Activated CD4-positive, alpha-beta memory T cell treated with anti-CD3 and anti-CD28 coated beads for 36 hours (primary cell): ENCODE measurements at regions of chr4 and their contacts with region 1.

Region 1: GRCh38 chr4:94406668-94407437 is 44.9 kb upstream of the PDLIM5 start:
- DNase-seq: peak; percentile 63
- H3K4me3 Mint-ChIP-seq: no peak overlapping the region
- H3K27ac Mint-ChIP-seq: no peak overlapping the region
- H3K4me1 Mint-ChIP-seq: no peaks in the 10 kb centered on the region
- H3K27me3 Mint-ChIP-seq: peaks cover 2% of the 10 kb centered on the region

Region 2: DNA sequence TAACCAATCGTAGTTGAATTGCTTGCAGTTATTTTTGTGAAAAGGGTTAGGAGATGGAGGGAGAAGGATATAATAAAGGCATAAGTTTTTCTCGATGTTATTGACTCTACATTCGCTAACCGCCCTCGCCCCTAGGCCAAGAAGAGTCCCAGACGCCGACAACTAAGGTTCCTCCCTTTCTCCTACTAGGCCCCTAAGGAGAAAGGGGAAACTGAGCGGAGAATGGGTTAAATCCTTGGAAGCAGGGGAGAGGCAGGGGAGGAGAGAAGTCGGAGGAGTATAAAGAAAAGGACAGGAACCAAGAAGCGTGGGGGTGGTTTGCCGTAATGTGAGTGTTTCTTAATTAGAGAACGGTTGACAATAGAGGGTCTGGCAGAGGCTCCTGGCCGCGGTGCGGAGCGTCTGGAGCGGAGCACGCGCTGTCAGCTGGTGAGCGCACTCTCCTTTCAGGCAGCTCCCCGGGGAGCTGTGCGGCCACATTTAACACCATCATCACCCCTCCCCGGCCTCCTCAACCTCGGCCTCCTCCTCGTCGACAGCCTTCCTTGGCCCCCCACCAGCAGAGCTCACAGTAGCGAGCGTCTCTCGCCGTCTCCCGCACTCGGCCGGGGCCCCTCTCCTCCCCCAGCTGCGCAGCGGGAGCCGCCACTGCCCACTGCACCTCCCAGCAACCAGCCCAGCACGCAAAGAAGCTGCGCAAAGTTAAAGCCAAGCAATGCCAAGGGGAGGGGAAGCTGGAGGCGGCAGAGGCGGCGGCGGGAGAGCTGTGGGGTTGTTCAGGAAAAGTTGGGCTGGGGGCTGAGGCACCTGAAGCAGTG is 572.4 kb before region 1 on chr4:
- CTCF ChIA-PET with region 1: no interaction called
- POLR2A ChIA-PET with region 1: no interaction called
- intact Hi-C with region 1: no loop called
- DNase-seq: no peak
- H3K4me3 Mint-ChIP-seq: no peak overlapping the region
- H3K27ac Mint-ChIP-seq: no peak overlapping the region
- H3K4me1 Mint-ChIP-seq: peaks cover 9% of the 10 kb centered on the region
- H3K27me3 Mint-ChIP-seq: peaks cover 60% of the 10 kb centered on the region

Region 3: GRCh38 chr4:94304365-94304971 is 102.4 kb before region 1 on chr4:
- CTCF ChIA-PET with region 1: interaction called, 10 read pairs
- POLR2A ChIA-PET with region 1: no interaction called
- intact Hi-C with region 1: no loop called
- DNase-seq: peak; percentile 12
- H3K4me3 Mint-ChIP-seq: no peak overlapping the region
- H3K27ac Mint-ChIP-seq: no peak overlapping the region
- H3K4me1 Mint-ChIP-seq: no peaks in the 10 kb centered on the region
- H3K27me3 Mint-ChIP-seq: no peaks in the 10 kb centered on the region

Region 4: DNA sequence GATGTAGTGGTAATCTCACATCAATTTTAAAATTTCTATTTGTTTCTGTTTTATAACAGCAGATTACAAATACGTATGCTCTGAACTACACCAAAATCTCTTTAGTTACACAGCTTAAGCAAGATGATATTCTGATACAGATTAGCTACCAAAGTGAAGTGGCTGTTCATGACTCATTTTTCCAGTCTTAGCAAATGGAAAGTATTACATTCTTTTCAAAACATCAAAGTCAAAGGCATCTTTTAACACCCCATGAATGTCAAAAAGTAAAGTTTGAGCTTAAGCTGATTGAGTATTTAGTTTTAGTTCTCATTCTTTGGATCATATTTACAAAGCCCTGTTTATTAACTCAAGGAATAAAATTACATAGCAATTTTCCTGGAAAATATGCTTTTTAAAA is 57.7 kb before region 1 on chr4:
- CTCF ChIA-PET with region 1: no interaction called
- POLR2A ChIA-PET with region 1: no interaction called
- intact Hi-C with region 1: no loop called
- DNase-seq: no peak
- H3K4me3 Mint-ChIP-seq: no peak overlapping the region
- H3K27ac Mint-ChIP-seq: peak overlapping the region; percentile 30
- H3K4me1 Mint-ChIP-seq: peaks cover 23% of the 10 kb centered on the region
- H3K27me3 Mint-ChIP-seq: peaks cover 2% of the 10 kb centered on the region

Region 5: GRCh38 chr4:94416981-94417380 is 10.1 kb after region 1 on chr4:
- CTCF ChIA-PET with region 1: interaction called, 13 read pairs
- POLR2A ChIA-PET with region 1: no interaction called
- intact Hi-C with region 1: no loop called
- DNase-seq: no peak
- H3K4me3 Mint-ChIP-seq: no peak overlapping the region
- H3K27ac Mint-ChIP-seq: no peak overlapping the region
- H3K4me1 Mint-ChIP-seq: no peaks in the 10 kb centered on the region
- H3K27me3 Mint-ChIP-seq: peaks cover 24% of the 10 kb centered on the region

Region 6: DNA sequence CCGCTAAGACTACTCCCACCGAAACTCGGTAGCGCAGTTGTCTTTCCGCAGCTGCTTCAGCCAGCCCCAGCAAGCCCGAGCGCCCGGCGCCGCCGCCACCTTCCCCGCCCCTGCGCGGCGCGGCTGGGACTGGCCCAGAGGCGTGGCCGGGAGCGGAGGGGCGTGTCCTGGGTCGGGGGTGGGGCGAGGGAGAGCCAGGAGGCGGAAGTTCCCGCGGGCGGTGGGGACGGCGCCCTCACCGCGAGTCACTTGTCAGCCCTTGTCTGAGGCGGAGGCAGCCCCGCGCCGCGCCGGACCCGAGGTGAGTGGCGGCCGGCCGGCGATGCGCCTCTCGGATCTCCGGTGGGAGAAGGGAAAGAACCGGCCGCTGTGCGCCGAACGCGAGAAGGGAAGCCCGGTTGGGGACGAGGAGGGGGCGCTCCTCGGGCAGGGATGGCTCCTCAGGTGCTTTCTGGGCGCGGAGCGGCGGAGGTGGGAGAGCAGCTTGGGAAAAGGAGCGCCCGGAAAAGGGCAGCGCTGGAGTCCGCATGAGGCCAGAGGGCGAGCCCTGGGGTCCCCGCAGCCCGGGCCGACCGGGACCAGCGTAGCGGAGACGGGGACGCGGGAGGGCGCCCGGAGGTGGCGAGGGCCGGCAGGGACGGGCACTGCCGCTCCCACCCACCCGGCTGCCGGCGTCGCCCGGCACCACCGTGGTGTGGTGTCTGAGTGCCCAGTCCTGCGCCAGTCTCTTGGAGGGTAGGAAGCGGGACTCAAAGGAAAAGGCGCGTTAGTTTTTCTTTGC is 45.0 kb after region 1 on chr4 and contains the start of gene PDLIM5:
- CTCF ChIA-PET with region 1: interaction called, 11 read pairs
- POLR2A ChIA-PET with region 1: no interaction called
- intact Hi-C with region 1: no loop called
- DNase-seq: peak; percentile 91
- H3K4me3 Mint-ChIP-seq: peak within 1 kb of the TSS; percentile 81
- H3K27ac Mint-ChIP-seq: peak within 1 kb of the TSS; percentile 43
- H3K4me1 Mint-ChIP-seq: peaks cover 15% of the 10 kb centered on the region
- H3K27me3 Mint-ChIP-seq: peaks cover 13% of the 10 kb centered on the region
- total RNA-seq, gene PDLIM5: 23.8 to 26.3 TPM

Region 7: DNA sequence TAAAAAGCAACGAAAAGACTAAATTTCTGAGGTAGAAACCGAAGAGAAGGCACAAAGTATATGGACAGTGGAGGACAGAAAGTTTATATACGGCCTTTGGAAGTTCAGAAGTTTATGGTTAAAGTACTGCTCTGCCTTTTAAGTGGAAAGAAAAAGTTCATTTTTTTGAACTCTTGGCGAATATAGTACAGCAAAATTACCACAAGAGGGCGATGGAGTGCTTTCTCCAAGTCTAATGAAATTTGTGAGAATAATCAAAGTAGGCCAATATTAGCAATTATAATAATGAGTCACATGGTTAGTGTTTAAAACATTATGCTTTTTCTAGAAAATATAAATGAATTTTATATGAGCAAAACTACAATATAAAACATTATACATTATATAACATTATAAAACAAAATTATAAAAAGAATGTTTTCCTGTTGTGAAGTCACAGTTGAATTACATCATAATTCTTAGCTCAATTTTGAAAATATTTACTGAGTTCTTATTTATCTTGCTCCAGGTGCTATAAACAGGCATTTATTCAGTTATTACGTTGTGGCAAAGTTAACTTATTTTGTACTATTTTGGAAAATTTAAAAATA is 214.7 kb after region 1 on chr4:
- CTCF ChIA-PET with region 1: interaction called, 12 read pairs
- POLR2A ChIA-PET with region 1: no interaction called
- intact Hi-C with region 1: no loop called
- DNase-seq: no peak
- H3K4me3 Mint-ChIP-seq: no peak overlapping the region
- H3K27ac Mint-ChIP-seq: no peak overlapping the region
- H3K4me1 Mint-ChIP-seq: no peaks in the 10 kb centered on the region
- H3K27me3 Mint-ChIP-seq: no peaks in the 10 kb centered on the region